Activated CD4-positive, alpha-beta memory T cell treated with anti-CD3 and anti-CD28 coated beads, Interleukin-2, amount 10 ng/mL, durations not matched to agents 7 days and 5 days (primary cell): ENCODE measurements at regions of chr4 and their contacts with region 1.

Region 1: GRCh38 chr4:337143-337931 is at the start of gene ZNF141:
- DNase-seq: peak; percentile 94
- H3K4me3 Mint-ChIP-seq: peak within 1 kb of the TSS; percentile 98
- H3K27ac Mint-ChIP-seq: peak within 1 kb of the TSS; percentile 93
- H3K4me1 Mint-ChIP-seq: peaks cover 34% of the 10 kb centered on the region
- H3K27me3 Mint-ChIP-seq: no peaks in the 10 kb centered on the region
- total RNA-seq, gene ZNF141: 22.1 to 23.8 TPM

Region 2: DNA sequence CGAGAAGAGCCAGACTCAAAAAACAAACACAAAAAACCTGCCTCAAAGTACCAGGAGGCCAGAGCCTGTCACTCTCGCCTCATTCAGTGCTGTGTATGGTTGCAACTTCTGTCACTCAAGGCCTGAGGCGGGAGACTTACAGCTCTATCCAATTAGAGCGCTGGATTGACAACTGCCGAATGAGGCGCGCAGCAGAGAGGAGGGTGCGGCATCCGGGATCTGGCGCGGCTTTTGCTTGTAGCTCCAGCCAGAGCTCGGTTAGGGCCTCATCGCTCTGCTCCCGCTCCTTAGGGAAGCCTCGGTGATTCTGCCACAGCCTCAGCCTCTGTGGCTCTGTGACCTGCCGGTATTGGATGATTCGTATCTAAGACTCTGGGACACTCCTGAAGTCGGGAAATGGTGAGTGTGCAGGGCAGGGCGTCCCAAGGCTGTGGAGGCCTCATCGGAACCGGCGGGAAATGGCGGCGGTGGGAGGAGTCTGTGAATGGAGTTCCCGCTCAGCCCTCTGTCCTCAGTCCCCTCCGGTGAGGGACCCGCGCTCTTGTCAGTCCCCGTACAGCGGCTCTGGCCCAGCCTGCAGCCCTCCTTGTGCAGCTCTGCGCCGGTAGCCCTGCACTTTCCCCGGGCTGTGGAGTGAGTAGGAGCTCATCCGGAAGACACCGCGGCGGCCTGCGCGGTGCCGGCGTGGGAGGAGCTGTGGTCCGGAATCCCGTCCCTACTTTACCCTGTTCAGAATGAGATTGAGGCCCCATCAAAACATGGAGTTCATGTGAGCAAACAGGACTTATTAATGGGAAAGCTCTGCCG is 212.9 kb before region 1 on chr4 and contains the start of gene ZNF718:
- CTCF ChIA-PET with region 1: no interaction called
- POLR2A ChIA-PET with region 1: interaction called, 27 read pairs
- DNase-seq: peak; percentile 95
- H3K4me3 Mint-ChIP-seq: peak within 1 kb of the TSS; percentile 97
- H3K27ac Mint-ChIP-seq: peak within 1 kb of the TSS; percentile 97
- H3K4me1 Mint-ChIP-seq: peaks cover 34% of the 10 kb centered on the region
- H3K27me3 Mint-ChIP-seq: no peaks in the 10 kb centered on the region
- total RNA-seq, gene ZNF718: 8.8 to 8.9 TPM

Region 3: GRCh38 chr4:473570-474457 is 136.5 kb after region 1 on chr4:
- CTCF ChIA-PET with region 1: no interaction called
- POLR2A ChIA-PET with region 1: interaction called, 25 read pairs
- DNase-seq: peak; percentile 95
- H3K4me3 Mint-ChIP-seq: peak overlapping the region; percentile 86
- H3K27ac Mint-ChIP-seq: peak overlapping the region; percentile 88
- H3K4me1 Mint-ChIP-seq: peaks cover 44% of the 10 kb centered on the region
- H3K27me3 Mint-ChIP-seq: no peaks in the 10 kb centered on the region

Region 4: DNA sequence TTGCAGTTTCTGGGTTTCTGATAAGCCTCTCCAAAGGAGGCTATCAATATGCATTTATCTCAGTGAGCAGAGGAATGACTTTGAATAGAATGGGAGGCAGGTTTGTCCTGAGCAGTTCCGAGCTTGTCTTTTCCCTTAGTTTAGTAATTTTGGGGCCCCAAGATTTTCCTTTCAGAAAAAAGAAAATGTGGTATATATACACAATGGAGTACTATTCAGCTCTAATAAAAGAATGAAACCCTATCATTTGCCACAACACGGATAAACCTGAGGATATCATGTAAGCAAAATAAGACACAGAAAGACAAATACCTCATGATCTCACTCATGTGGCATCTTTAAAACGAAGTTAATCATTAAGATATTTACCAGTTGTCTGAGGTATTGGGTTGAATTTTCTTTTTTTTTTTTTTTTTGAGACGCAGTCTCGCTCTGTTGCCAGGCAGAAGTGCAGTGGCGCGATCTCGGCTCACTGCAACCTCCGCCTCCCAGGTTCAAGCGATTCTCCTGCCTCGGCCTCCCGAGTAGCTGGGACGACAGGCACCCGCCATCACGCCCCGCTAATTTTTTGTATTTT is 161.1 kb after region 1 on chr4:
- CTCF ChIA-PET with region 1: no interaction called
- POLR2A ChIA-PET with region 1: interaction called, 15 read pairs
- DNase-seq: no peak
- H3K4me3 Mint-ChIP-seq: peak overlapping the region; percentile 94
- H3K27ac Mint-ChIP-seq: peak overlapping the region; percentile 92
- H3K4me1 Mint-ChIP-seq: peaks cover 56% of the 10 kb centered on the region
- H3K27me3 Mint-ChIP-seq: no peaks in the 10 kb centered on the region

Region 5: DNA sequence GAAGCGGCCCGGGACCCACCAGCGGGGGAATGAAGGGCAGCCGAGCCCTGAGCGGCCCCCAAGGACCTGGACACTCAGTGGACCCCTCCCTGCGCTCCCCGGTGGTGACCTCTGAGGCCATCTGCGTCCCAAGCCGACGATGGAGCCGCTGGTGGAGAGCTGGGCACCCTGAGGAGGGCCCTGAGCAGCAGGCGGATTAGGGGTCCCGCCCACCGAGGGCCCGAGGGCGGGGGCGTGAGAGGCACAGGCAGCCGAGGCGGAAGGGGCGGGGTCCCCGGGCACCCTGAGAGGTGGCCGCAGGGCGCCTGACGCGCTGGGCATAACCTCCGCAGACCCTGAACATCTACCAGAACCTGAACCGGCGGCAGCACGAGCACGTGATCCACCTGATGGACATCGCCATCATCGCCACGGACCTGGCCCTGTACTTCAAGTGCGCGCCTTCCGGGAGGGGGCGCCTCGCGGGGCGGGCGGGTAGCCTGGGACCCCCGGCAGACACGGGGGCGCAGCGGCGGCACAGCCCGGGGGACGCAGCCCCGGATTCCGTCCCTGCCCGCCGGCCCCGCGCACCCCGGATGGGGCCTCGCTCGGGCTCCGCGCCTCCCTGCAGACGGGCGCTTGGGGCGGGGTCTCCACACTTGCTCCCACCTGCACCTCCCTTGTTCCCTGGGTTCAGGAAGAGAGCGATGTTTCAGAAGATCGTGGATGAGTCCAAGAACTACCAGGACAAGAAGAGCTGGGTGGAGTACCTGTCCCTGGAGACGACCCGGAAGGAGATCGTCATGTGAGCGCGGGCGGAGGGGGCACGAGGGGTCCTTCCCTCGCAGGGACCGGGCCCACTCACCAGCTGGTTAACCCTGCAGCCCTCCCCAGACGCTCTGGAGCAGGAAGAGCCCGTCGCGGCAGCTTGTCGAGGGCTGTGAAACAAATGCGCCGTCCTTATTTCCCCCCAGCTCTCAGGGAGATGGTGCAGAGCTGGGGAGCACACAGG is 326.4 kb after region 1 on chr4:
- CTCF ChIA-PET with region 1: no interaction called
- POLR2A ChIA-PET with region 1: interaction called, 10 read pairs
- DNase-seq: peak; percentile 78
- H3K4me3 Mint-ChIP-seq: peak overlapping the region; percentile 76
- H3K27ac Mint-ChIP-seq: peak overlapping the region; percentile 73
- H3K4me1 Mint-ChIP-seq: peaks cover 15% of the 10 kb centered on the region
- H3K27me3 Mint-ChIP-seq: no peaks in the 10 kb centered on the region

Region 6: DNA sequence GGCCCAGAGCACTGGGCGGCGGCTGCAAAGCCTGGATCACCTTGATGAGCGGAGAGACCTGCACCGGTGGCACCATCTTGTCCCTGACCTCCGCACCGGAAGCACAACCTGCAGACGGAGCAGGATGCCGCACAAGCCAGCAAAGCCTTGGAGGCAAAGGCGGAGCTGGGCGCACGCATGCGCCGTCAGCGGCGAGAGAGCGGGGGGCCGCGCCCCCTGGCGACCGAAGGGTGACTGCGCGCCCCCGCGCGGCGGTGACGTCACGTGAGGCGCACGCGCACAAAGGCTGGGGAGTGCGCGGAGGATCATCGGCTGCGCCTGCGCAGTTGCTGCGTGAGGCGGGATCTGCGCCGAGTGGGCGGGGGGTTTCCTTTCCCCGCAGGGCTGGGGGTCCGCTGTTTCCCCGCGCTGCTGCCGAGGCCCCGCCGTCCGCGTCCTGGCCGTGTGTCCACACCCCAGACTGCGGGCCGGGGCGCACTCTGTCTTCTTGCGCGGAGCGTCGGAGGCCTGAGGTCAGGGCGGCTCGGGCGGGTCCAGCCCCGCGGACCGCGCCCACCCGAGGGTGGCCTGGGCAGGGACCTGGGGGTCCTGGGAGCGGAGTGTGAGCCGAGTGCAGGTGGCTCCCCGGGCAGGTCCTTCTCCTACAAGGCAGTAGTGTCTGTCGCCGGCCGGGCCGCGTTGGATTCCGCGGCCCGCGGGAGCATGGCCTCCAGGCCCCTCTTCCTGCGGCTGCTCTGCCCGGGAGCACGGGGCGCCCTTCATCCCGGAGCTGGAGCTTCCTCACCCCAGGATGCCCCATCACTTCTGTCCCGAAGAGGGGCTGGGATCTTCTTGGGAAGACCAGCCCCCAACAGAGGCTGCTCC is 337.1 kb after region 1 on chr4 and contains the starts of genes ATP5ME and MYL5:
- CTCF ChIA-PET with region 1: no interaction called
- POLR2A ChIA-PET with region 1: interaction called, 14 read pairs
- DNase-seq: peak; percentile 98
- H3K4me3 Mint-ChIP-seq: peak within 1 kb of the TSS; percentile 85
- H3K27ac Mint-ChIP-seq: peak within 1 kb of the TSS; percentile 80
- H3K4me1 Mint-ChIP-seq: peaks cover 13% of the 10 kb centered on the region
- H3K27me3 Mint-ChIP-seq: no peaks in the 10 kb centered on the region
- total RNA-seq, gene ATP5ME: 205 TPM
- total RNA-seq, gene MYL5: 14.0 to 16.2 TPM